GM12878 (cell line): ENCODE measurements at regions of chr1 and their contacts with region 1.

Region 1: DNA sequence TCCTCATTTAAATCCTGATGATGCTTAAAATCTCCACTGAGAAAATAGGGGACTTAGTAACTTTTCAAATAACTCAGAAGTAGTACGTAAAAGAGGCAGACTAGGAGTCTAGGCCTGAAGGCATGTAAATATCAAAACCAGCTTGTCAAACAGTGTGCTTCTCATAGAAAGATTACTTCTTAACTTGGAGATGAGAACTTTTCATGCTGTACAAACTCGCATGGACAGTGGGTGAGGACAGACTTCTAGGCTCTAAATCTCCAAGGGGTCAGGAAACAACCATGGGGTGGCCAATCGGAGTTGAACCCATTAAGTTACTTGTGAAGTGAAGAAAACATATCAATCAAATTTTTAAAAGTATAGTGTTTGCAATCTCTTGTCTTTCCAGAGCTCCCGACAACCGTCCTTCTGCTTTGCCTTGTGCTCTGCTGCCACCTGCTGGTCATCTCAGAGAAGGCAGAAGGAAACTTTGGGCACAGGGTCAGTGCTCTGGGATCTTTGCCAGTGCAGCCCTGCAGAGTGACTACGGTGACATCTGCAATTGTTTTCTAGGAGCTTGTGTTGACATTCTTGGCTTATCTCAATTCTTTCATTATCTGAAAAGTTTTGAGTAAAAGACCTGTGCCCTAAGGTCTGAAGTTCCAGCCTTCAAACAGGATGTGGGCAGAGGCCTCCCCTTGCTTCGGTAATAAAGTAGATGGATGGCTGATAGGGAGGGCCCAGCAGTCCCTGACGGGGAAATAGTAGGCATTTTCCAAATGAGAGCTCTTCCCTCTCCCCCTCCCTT is 105.1 kb upstream of the PDE4B start:
- DNase-seq: peak; percentile 16
- ATAC-seq: peak; percentile 95
- H3K4me3 ChIP-seq: no peak overlapping the region
- H3K27ac ChIP-seq: no peak overlapping the region
- H3K4me1 ChIP-seq: no peaks in the 10 kb centered on the region
- H3K27me3 ChIP-seq: 0 out of 4 replicates have a peak, but pooled peaks cover 0 to 4% of the 10 kb centered on the region in 2 experiments
- CTCF ChIP-seq: peak; percentile 84 to 87 (median 86)
- EP300 ChIP-seq: no peak
- POLR2A ChIP-seq: no peak
- RAD21 ChIP-seq: peak; percentile 100

Region 2: GRCh38 chr1:64686828-64687724 is 1000.5 kb before region 1 on chr1:
- CTCF ChIA-PET with region 1: no interaction called
- POLR2A ChIA-PET with region 1: no interaction called
- RAD21 ChIA-PET with region 1: no interaction called
- SMC1A ChIA-PET with region 1: no interaction called
- in situ Hi-C with region 1: no loop called
- intact Hi-C with region 1: loop called (anchors 1 kb)
- DNase-seq: no peak
- ATAC-seq: peak; percentile 74
- H3K4me3 ChIP-seq: no peak overlapping the region
- H3K27ac ChIP-seq: no peak overlapping the region
- H3K4me1 ChIP-seq: no peaks in the 10 kb centered on the region
- H3K27me3 ChIP-seq: peaks cover 0 to 2% of the 10 kb centered on the region in 2 experiments; a peak in 2 of 4 replicates
- CTCF ChIP-seq: peak; percentile 64 to 83 (median 75)
- EP300 ChIP-seq: no peak
- POLR2A ChIP-seq: no peak
- RAD21 ChIP-seq: peak; percentile 62

Region 3: DNA sequence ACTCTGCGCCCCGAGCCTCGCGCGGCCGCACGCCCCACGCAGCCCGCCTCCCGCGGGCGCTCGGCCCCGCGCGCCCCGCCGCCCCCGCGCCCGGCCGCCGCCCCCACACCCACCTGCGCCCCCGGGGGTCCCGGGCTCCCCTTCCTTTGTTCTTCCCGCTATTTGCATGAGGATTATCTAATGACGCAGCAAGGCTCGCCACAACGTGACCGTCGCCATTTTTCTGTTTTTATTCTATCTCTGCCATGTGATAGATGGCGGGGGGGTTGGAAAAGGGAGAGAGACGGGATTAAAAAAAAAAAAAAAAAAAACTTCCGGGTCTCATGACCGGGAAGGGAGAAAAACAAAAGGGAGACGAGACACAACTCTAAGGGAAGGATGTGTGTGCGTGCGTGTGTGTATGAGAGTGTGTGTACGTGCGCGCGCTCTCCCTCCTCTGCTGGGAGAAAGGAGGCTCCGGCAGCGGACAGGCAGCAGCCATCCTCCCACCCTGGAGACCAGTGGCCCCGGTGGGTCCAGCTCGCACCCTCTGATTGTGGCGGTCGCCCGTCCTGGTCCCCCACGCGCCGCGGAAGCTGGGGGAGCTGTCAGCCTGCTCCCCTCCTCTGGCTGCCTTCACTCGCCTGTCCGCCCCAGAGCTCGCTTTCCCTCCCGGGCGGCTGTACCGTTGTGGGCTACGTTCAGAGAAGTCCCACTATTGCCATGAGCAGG is 620.0 kb before region 1 on chr1:
- CTCF ChIA-PET with region 1: interaction called, 34 read pairs
- POLR2A ChIA-PET with region 1: no interaction called
- RAD21 ChIA-PET with region 1: interaction called, 3 read pairs
- SMC1A ChIA-PET with region 1: interaction called, 16 read pairs
- in situ Hi-C with region 1: no loop called
- intact Hi-C with region 1: no loop called
- DNase-seq: no peak
- ATAC-seq: peak; percentile 65
- H3K4me3 ChIP-seq: peak overlapping the region; percentile 86
- H3K27ac ChIP-seq: peak overlapping the region; percentile 18; the same call in 1 of the 2 replicates
- H3K4me1 ChIP-seq: peaks cover 4% of the 10 kb centered on the region; the same call in 1 of the 2 replicates
- H3K27me3 ChIP-seq: peaks cover 3 to 4% of the 10 kb centered on the region in 2 experiments; a peak in 3 of 4 replicates
- CTCF ChIP-seq: no peak
- EP300 ChIP-seq: no peak
- POLR2A ChIP-seq: peak; percentile 56
- RAD21 ChIP-seq: no peak

Region 4: GRCh38 chr1:65230731-65231481 is 456.7 kb before region 1 on chr1:
- CTCF ChIA-PET with region 1: interaction called, 61 read pairs
- POLR2A ChIA-PET with region 1: no interaction called
- RAD21 ChIA-PET with region 1: interaction called, 14 read pairs
- SMC1A ChIA-PET with region 1: interaction called, 21 read pairs
- in situ Hi-C with region 1: loop called (anchors 5 kb)
- intact Hi-C with region 1: loop called (anchors 1 kb)
- DNase-seq: no peak
- ATAC-seq: peak; percentile 65
- H3K4me3 ChIP-seq: no peak overlapping the region
- H3K27ac ChIP-seq: no peak overlapping the region
- H3K4me1 ChIP-seq: no peaks in the 10 kb centered on the region
- H3K27me3 ChIP-seq: no peaks in the 10 kb centered on the region
- CTCF ChIP-seq: no peak
- EP300 ChIP-seq: no peak
- POLR2A ChIP-seq: no peak
- RAD21 ChIP-seq: 0 out of 2 replicates have a peak, but pooled peaks have one; percentile 4

Region 5: GRCh38 chr1:65431111-65431705 is 256.4 kb before region 1 on chr1:
- CTCF ChIA-PET with region 1: interaction called, 30 read pairs
- POLR2A ChIA-PET with region 1: no interaction called
- RAD21 ChIA-PET with region 1: interaction called, 6 read pairs
- SMC1A ChIA-PET with region 1: interaction called, 10 read pairs
- in situ Hi-C with region 1: no loop called
- intact Hi-C with region 1: loop called (anchors 1 kb)
- DNase-seq: no peak
- ATAC-seq: peak; percentile 73
- H3K4me3 ChIP-seq: no peak overlapping the region
- H3K27ac ChIP-seq: no peak overlapping the region
- H3K4me1 ChIP-seq: no peaks in the 10 kb centered on the region
- H3K27me3 ChIP-seq: no peaks in the 10 kb centered on the region
- CTCF ChIP-seq: peak; percentile 51 to 59 (median 53)
- EP300 ChIP-seq: no peak
- POLR2A ChIP-seq: no peak
- RAD21 ChIP-seq: peak; percentile 52

Region 6: DNA sequence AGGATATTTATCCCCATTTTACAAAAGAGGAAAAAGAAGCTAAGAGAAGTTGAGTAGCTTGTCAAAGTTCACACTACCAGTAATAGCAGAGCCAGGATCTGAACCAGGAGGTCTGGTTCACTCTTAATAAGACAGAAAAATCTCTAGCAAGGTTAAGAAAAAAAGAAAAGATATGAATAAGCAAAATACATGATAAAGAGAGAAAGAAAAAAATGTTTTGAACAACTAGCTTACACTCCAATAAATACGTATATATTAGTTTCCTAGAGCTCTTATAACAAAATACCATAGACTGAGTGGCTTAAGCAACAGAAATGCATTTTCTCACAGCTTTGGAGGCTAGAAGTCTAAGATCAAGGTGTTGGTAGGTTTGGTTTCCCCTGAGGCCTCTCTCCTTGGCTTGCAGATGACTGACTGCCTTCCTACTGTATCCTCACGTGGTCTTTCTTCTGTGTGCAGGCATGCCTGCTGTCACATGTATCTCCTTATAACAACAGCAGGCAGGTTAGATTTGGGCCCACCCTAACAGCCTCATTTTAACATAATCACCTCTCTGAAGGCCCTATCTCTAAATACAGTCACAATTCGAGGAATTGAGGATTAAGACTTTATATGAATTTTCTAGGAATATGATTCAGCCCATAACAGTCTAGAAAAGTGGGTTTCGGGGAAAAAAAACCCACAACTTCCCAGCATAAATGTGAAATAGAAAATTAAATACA is 206.8 kb before region 1 on chr1:
- CTCF ChIA-PET with region 1: no interaction called
- POLR2A ChIA-PET with region 1: no interaction called
- RAD21 ChIA-PET with region 1: no interaction called
- SMC1A ChIA-PET with region 1: no interaction called
- in situ Hi-C with region 1: no loop called
- intact Hi-C with region 1: no loop called
- DNase-seq: no peak
- ATAC-seq: no peak
- H3K4me3 ChIP-seq: no peak overlapping the region; the same call in 1 of the 2 replicates
- H3K27ac ChIP-seq: no peak overlapping the region
- H3K4me1 ChIP-seq: no peaks in the 10 kb centered on the region
- H3K27me3 ChIP-seq: no peaks in the 10 kb centered on the region
- CTCF ChIP-seq: no peak
- EP300 ChIP-seq: no peak
- POLR2A ChIP-seq: no peak
- RAD21 ChIP-seq: no peak